ENCODE measurements at regions of chrX and their contacts with region 1.

Region 1: GRCh38 chrX:55801805-55802204 is 84.3 kb downstream of the RRAGB start:
- DNase-seq: peak; percentile 14
- ATAC-seq: peak; percentile 33; the same call in 1 of the 2 replicates
- H3K4me3 ChIP-seq: no peak overlapping the region
- H3K27ac ChIP-seq: no peak overlapping the region
- H3K4me1 ChIP-seq: no peaks in the 10 kb centered on the region
- H3K27me3 ChIP-seq: no peaks in the 10 kb centered on the region
- CTCF ChIP-seq: no peak

Region 2: DNA sequence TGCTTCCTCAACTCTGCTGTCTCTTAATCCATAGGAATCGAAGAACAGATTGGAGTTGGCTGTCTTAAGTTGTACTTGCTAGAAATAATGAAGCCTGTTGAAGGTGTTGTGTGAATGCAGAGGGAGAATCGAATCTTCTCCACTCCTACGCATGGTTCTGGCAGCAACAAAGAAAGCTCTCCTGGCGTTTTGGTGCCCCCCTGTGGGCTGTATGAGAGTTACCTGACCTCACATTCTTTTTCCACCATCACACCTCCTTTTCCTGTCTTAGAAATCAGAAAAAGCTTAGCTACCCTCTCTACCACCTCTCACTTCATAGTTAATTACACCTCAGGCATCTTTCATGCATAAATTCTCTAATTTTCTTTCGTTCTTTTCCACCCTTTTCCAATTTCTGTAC is 446.7 kb after region 1 on chrX:
- CTCF ChIA-PET with region 1: interaction called, 3 read pairs
- POLR2A ChIA-PET with region 1: no interaction called
- intact Hi-C with region 1: loop called (anchors 1 kb)
- DNase-seq: peak; percentile 60
- ATAC-seq: peak; percentile 53
- H3K4me3 ChIP-seq: no peak overlapping the region
- H3K27ac ChIP-seq: no peak overlapping the region
- H3K4me1 ChIP-seq: no peaks in the 10 kb centered on the region
- H3K27me3 ChIP-seq: no peaks in the 10 kb centered on the region
- CTCF ChIP-seq: peak; percentile 74

Measured in PC-3 (cell line).